Dorsolateral prefrontal cortex (tissue), 120 donors: ENCODE measurements at regions of chrX and their contacts with region 1.

Region 1: DNA sequence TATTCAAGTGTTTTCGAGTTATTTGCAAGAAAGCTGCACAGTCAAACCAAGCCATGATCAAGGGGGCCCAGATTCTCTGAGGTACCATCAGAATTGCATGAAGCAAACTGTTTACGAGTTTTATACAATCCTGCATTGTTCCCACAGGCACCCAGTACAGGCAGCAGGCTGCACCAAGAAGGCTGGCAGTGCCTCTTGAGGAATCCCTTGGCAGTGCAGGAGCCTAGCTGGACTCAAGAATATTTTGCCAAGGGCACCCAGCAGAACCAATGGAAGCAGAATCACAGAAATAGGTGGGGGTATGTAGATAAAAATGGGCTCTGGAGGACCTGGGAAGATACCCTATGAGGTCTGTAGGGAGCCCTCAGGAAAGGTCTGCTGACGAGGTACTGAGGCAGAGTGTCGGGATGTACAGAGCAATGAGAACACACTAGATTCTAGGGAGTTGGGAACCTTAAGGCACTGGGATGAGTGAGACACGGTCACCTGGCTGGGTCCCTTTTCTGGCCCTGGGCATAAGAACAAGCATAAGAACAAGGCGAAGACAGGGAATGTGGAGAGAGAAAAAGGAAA is 2.5 kb upstream of the PLP1 start:
- DNase-seq: peak in 5 of 10 donors; percentile 18 to 47 (median 41)
- H3K4me3 ChIP-seq: peak overlapping the region in 36 of 59 donors; percentile 0 to 75 (median 58)
- H3K27ac ChIP-seq: peak overlapping the region in 58 of 59 donors; percentile 49 to 97 (median 86)
- H3K27me3 ChIP-seq: peaks cover 0 to 76% (median 5%) of the 10 kb centered on the region in 45 donors
- CTCF ChIP-seq: peak in 55 of 56 donors; percentile 11 to 74 (median 57)

Region 2: DNA sequence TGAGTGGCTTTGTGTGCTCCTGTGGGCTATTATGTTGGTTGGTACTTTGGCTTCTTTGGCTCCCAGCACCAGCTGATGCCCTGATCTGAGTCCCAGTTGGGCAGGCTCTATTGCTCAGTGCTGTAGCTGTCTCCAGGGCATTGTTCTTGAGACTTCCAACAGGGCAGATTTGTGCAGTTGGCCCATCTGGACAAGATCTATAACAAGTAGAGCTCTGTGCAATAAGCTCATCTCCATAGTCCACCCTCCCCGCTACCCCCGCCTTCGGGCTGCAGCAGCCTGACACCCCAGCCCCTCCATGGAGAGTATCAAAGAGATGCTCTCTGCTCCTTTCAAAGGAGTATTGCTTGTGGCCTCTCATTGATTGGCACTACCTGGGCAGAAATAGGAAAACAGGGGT is 69.3 kb before region 1 on chrX:
- intact Hi-C with region 1: loop called (anchors 2 to 5 kb)
- DNase-seq: peak in 9 of 10 donors; percentile 61 to 93 (median 83)
- H3K4me3 ChIP-seq: no peak overlapping the region
- H3K27ac ChIP-seq: peak overlapping the region in 58 of 59 donors; percentile 57 to 100 (median 88)
- H3K27me3 ChIP-seq: peaks cover 0 to 54% (median 8%) of the 10 kb centered on the region in 45 donors
- CTCF ChIP-seq: no peak

Region 3: GRCh38 chrX:103716962-103717361 is 57.2 kb before region 1 on chrX:
- intact Hi-C with region 1: loop called in 1 of 2 experiments (anchors 5 kb)
- DNase-seq: no peak
- H3K4me3 ChIP-seq: no peak overlapping the region
- H3K27ac ChIP-seq: no peak overlapping the region
- H3K27me3 ChIP-seq: peaks cover 0 to 48% (median 7%) of the 10 kb centered on the region in 45 donors
- CTCF ChIP-seq: no peak

Region 4: GRCh38 chrX:103817502-103817901 is 43.3 kb after region 1 on chrX:
- intact Hi-C with region 1: loop called in 1 of 2 experiments (anchors 2 kb)
- DNase-seq: peak in 1 of 10 donors; percentile 8
- H3K4me3 ChIP-seq: no peak overlapping the region
- H3K27ac ChIP-seq: no peak overlapping the region
- H3K27me3 ChIP-seq: peaks cover 0 to 48% (median 3%) of the 10 kb centered on the region in 45 donors
- CTCF ChIP-seq: peak; percentile 54 to 98 (median 86)